ENCODE measurements at regions of chr7 and their contacts with region 1.

Region 1: DNA sequence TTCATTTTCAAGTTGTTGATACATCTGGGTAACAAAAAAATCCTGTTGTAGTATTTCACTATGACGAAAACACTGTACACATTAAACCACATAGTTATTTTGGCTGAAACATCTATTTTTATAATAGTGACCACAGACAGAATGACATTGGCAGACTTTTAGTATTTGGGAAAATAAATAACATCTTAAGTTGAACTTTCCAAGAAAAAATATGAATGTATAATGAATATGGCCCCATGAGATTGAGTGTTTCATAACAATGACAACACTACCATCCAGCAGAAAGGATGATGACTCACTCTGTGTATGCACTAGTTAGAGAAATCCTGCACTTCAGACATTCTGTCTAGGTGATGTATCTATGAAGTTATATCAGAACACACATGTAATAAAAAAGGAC is 118.1 kb downstream of the SEMA3D start:
- DNase-seq: peak; percentile 62
- H3K4me3 ChIP-seq: no peak overlapping the region
- CTCF ChIP-seq: no peak

Region 2: DNA sequence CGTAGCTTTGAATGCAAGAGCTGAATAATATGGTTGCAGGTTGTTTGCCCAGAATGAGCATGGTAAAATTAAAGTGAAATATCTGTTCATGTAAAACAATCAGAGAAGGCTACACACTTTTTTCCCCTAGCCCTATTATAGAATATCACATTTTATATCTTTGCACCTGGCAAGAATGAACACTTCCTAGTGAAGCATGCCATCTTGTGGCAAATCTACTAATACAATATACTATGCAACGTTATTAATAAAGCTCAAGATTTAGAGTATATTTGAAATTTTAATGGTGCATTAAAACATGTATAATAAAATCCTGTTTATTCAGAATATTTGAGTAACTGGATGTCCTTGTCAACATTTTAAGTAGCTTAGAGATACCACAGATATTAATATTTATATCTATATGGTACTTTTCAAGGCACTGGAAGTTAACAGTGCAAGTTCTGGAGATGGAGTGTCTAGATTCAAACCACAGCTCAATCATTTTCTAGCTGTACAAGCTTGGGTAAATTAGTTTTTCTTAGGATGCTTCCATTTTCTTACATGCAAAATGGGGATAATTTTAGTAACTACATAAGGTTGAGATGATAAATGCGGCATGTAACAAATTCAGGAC is 761.1 kb after region 1 on chr7:
- in situ Hi-C with region 1: loop called (anchors 25 kb)
- DNase-seq: peak; percentile 4
- H3K4me3 ChIP-seq: no peak overlapping the region
- CTCF ChIP-seq: peak; percentile 21

Measured in astrocyte of the cerebellum (primary cell).